Gastrocnemius medialis (tissue), 4 donors: ENCODE measurements at regions of chr7 and their contacts with region 1.

Region 1: DNA sequence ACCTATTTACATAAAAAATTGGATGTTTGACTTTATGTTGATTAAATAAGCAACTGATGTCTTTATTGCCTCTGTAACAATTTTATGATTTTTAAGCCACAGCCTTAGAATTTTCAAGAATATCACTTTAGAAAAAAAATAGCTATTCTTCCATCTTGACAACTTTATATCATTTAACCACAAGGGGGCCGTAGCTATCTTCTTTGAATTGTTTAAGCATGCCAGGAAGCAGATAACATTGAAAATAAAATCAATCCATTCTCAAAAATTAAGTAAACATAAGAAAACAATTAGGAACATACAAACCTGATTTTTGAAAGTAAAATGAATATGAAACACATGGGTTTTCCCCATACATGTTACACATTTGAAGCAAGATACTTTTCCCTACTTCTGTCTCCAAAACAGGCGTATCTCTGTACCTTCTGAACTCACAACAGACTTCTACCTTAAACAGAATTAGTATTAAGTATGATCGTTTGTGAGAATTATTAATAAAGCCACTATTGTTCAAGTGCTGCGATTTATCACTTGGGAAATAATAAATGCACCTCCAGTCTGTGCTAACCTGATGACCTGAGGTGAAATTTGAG is 209.0 kb downstream of the CACNA2D1 start:
- DNase-seq: no peak
- ATAC-seq: peak in 1 of 2 donors; percentile 55
- H3K4me3 ChIP-seq: no peak overlapping the region
- H3K27ac ChIP-seq: peak overlapping the region; percentile 53 to 64 (median 59)
- H3K4me1 ChIP-seq: peaks cover 44 to 56% of the 10 kb centered on the region in 2 donors
- H3K27me3 ChIP-seq: no peaks in the 10 kb centered on the region
- CTCF ChIP-seq: peak; percentile 55 to 68 (median 63)
- POLR2A ChIP-seq: no peak

Region 2: GRCh38 chr7:81704595-81704994 is 530.0 kb before region 1 on chr7:
- in situ Hi-C with region 1: no loop called
- intact Hi-C with region 1: no loop called
- DNase-seq: no peak
- ATAC-seq: no peak
- H3K4me3 ChIP-seq: no peak overlapping the region
- H3K27ac ChIP-seq: no peak overlapping the region
- H3K4me1 ChIP-seq: no peaks in the 10 kb centered on the region
- H3K27me3 ChIP-seq: no peaks in the 10 kb centered on the region
- CTCF ChIP-seq: no peak
- POLR2A ChIP-seq: no peak

Region 3: DNA sequence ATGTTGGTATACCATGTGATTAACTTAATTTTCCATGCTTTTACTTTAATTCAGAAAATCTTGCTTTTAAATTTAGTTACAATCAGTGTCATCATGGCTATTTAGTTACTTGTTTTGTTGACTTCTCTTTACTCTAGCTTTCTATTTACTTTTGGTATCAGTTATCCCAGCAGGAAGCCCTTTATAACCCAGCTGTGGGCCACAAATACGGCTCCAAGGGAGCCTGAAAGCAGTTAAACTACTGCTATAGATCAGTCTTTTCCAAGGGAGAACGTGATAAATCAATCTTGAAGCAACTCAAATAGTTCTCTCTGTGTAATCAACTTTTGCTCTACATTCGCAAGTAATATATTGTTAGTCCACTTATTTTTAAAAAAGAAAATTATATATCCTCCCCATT is 78.4 kb before region 1 on chr7:
- in situ Hi-C with region 1: no loop called
- intact Hi-C with region 1: no loop called
- DNase-seq: no peak
- ATAC-seq: no peak
- H3K4me3 ChIP-seq: no peak overlapping the region
- H3K27ac ChIP-seq: no peak overlapping the region
- H3K4me1 ChIP-seq: peaks cover 56 to 61% of the 10 kb centered on the region in 2 donors
- H3K27me3 ChIP-seq: no peaks in the 10 kb centered on the region
- CTCF ChIP-seq: no peak
- POLR2A ChIP-seq: no peak

Region 4: GRCh38 chr7:82319674-82320118 is 85.1 kb after region 1 on chr7:
- in situ Hi-C with region 1: no loop called
- intact Hi-C with region 1: loop called (anchors 5 kb)
- DNase-seq: peak; percentile 87 to 95
- ATAC-seq: peak; percentile 67 to 84
- H3K4me3 ChIP-seq: peak overlapping the region in 1 of 4 donors; percentile 14
- H3K27ac ChIP-seq: peak overlapping the region; percentile 79 to 88 (median 84)
- H3K4me1 ChIP-seq: peaks cover 56 to 61% of the 10 kb centered on the region in 2 donors
- H3K27me3 ChIP-seq: no peaks in the 10 kb centered on the region
- CTCF ChIP-seq: no peak
- POLR2A ChIP-seq: no peak

Region 5: DNA sequence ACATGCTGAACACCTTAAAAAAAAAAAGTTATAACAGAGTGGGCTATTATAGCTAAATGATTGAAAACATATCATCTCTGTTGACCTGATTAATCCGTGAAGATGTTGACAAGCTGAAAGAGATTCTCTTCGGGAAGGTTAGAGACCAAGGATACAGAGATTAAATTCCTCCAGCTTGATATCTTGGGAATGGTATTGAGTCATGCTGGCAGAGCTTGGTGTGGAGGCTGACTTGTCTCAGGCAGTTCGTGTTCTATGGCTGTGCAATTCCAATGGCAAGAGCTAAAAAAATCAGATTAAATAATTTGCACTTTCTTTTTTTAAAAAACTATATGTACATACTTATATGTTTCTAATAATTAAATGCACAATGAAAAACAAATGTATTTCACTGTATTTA is 233.9 kb after region 1 on chr7:
- in situ Hi-C with region 1: loop called in 3 of 4 experiments (anchors 10 to 25 kb)
- intact Hi-C with region 1: no loop called
- DNase-seq: no peak
- ATAC-seq: no peak
- H3K4me3 ChIP-seq: no peak overlapping the region
- H3K27ac ChIP-seq: no peak overlapping the region
- H3K4me1 ChIP-seq: peaks cover 7 to 19% of the 10 kb centered on the region in 2 donors
- H3K27me3 ChIP-seq: no peaks in the 10 kb centered on the region
- CTCF ChIP-seq: no peak
- POLR2A ChIP-seq: no peak

Region 6: GRCh38 chr7:82572195-82572880 is 337.8 kb after region 1 on chr7:
- in situ Hi-C with region 1: loop called in 2 of 4 experiments (anchors 5 kb)
- intact Hi-C with region 1: loop called (anchors 1 kb)
- DNase-seq: peak; percentile 61 to 74
- ATAC-seq: peak; percentile 88 to 93
- H3K4me3 ChIP-seq: peak overlapping the region in 2 of 4 donors; percentile 19 to 24
- H3K27ac ChIP-seq: no peak overlapping the region
- H3K4me1 ChIP-seq: peaks cover 0 to 11% of the 10 kb centered on the region in 2 donors
- H3K27me3 ChIP-seq: no peaks in the 10 kb centered on the region
- CTCF ChIP-seq: peak; percentile 83 to 94 (median 87)
- POLR2A ChIP-seq: no peak